ENCODE measurements at regions of chr1 and their contacts with region 1.

Region 1: DNA sequence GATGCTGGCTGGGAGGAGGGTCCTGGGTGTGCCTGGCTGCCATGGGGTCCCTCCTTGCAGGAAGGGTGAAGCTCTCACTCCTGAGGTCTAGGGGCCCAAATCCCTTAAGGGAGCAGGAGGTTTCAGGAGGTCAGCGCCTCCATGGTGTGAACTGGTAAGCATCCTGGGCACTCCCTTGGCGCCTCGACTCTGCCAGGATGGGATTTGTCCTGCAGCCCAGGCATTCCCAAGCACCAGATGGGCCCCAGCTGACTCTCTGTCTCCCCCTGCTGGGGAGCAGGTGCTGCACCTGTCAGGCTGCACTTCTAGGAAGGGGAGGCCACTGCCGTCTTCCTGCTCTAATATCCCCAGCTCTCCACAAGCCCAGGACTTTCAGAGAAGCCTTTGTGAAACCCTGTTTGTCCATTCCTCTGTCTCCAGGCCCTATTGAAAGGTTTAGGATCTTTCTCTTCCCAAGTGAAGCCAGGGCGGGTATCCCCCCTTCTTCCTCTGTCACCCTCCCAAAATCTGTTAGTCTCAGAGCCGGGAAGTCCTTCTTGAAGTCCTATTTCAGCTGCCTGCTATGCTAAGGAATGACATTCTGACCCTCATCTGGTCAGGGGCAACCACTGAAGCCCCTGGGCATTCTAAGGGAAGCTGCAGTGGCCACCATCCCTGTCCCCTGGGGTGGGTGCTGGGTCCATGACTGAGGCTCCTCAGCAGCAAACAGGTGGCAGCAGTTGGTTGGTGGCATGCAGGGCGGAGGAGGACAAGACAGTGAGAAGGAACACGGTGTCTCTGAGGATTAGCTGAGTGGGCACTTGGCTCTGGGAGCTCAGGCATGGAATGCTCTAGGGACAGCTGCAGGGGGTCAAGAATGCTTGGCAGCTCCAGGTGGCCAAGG is 3.3 kb downstream of the MYBPH start:
- H3K4me3 ChIP-seq: no peak overlapping the region
- H3K27ac ChIP-seq: no peak overlapping the region; the same call in 1 of the 2 replicates
- H3K4me1 ChIP-seq: no peaks in the 10 kb centered on the region; the same call in 1 of the 2 replicates
- CTCF ChIP-seq: peak; percentile 85

Region 2: GRCh38 chr1:203101915-203102634 is 70.3 kb before region 1 on chr1:
- CTCF ChIA-PET with region 1: interaction called, 10 read pairs
- POLR2A ChIA-PET with region 1: no interaction called
- H3K4me3 ChIP-seq: no peak overlapping the region
- H3K27ac ChIP-seq: no peak overlapping the region
- H3K4me1 ChIP-seq: no peaks in the 10 kb centered on the region
- CTCF ChIP-seq: no peak

Region 3: GRCh38 chr1:203127666-203128430 is 44.5 kb before region 1 on chr1 and contains the start of gene ADORA1:
- CTCF ChIA-PET with region 1: interaction called, 32 read pairs
- POLR2A ChIA-PET with region 1: interaction called, 5 read pairs
- H3K4me3 ChIP-seq: peak within 1 kb of the TSS; percentile 43
- H3K27ac ChIP-seq: peak within 1 kb of the TSS; percentile 42; the same call in 1 of the 2 replicates
- H3K4me1 ChIP-seq: no peaks in the 10 kb centered on the region
- CTCF ChIP-seq: no peak; the same call in none of the 2 replicates

Region 4: DNA sequence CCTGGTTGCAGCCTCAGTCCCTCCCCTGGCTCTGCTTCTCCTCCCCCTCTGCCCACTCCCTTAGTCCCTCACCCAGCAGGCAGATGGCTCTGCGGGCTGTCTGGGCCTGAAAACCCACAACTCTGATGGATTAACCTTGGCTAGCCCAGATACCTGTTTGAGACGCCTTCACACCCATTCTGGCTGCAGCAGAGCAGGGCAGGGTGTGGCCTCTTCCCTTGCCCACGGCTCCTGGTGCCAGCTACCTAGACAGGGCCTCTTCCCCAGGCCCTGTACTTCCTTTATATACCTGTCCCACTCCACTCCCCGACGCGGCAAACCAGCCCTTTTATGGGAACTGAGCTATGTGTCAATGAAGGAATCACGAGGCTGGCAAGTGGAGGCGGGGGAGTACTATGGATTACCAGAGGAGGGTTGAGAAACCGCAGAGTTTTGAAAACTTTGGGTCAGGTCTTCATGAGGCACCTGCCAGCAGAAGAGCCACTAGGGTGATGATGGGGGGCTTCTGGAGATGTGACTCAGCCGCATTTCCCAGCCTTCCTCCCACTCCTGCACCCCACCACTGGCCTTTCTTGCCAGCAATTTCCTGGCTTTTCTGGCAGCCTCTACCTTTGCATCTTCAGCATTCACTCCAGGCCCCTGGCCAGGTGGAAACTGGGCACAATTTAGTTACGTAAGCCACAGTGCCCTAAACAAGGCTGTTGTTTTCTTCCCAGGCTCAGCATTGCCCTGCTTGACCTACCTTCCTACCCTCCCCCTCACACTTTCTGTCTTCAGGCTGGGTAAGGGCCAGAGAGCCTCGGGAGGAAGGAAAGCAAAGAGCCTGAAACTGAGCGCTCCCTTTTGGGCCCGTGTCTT is 14.3 kb after region 1 on chr1 and contains the start of gene CHI3L1:
- CTCF ChIA-PET with region 1: interaction called, 20 read pairs
- POLR2A ChIA-PET with region 1: no interaction called
- H3K4me3 ChIP-seq: no peak within 1 kb of the TSS
- H3K27ac ChIP-seq: no peak within 1 kb of the TSS
- H3K4me1 ChIP-seq: no peaks in the 10 kb centered on the region
- CTCF ChIP-seq: no peak

Region 5: DNA sequence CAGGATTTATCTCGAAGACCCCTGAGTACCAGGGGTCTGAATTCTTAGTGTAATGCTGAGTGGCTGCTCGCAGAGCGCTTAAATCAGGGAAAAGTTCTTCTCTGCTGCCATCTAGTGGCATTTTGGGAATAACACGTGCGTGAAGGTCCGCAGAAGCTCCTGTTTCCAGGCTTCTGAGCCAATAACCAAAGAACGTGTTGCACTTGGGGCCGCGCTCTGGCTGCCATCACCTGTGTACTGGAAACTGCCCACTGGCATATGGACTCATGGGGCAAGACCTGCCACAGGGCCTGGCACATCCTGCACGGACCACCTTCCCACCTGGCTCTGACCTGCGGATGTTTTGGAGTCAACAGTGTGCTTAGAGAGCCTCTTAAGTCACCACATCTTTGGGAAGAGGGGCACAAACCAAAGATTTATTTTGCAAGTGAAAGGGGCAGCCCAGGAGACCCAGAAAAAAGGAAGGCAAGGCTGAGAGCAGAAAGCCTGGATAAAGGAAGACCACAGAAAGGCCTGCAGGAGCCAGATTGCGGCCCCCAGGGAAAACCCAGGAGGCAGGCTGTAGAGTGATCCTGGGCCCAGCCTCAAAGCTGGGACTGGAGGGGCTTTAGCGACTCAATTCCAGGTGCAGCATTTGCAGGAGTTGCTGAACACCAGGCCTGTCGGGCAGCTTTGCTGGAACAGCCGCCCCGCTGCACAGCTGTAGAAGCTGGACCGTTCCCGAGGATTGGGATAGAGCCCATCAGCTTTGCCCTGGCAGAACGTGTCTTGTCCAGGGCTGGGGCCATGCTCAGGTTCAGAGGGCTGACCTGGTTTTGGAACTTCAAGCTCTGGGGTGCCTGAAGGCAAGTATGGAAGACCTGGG is 44.1 kb after region 1 on chr1:
- CTCF ChIA-PET with region 1: interaction called, 22 read pairs
- POLR2A ChIA-PET with region 1: no interaction called
- H3K4me3 ChIP-seq: no peak overlapping the region
- H3K27ac ChIP-seq: no peak overlapping the region
- H3K4me1 ChIP-seq: no peaks in the 10 kb centered on the region
- CTCF ChIP-seq: peak; percentile 65

Region 6: DNA sequence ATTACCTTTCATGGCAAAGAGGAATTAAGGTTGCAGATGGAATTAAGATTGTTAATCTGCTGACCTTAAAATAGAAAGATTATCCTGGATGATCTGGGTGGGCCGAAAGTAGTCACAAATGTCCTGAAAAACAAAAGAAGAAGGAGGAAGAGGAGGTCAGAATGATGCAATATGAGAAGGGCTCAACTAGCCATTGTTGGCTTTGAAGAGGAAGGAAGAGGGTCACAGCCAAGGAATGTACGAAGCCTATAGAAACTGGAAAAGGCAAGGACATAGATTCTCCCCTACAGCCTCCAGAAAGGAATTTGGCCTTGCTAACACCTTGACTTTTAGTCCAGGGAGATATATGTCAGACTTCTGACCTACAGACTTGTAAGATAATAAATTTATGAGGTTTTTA is 217.9 kb after region 1 on chr1:
- CTCF ChIA-PET with region 1: no interaction called
- POLR2A ChIA-PET with region 1: no interaction called
- H3K4me3 ChIP-seq: no peak overlapping the region
- H3K27ac ChIP-seq: no peak overlapping the region
- H3K4me1 ChIP-seq: no peaks in the 10 kb centered on the region
- CTCF ChIP-seq: no peak

Region 7: GRCh38 chr1:203428981-203429599 is 256.7 kb after region 1 on chr1:
- CTCF ChIA-PET with region 1: no interaction called
- POLR2A ChIA-PET with region 1: no interaction called
- H3K4me3 ChIP-seq: no peak overlapping the region
- H3K27ac ChIP-seq: no peak overlapping the region
- H3K4me1 ChIP-seq: no peaks in the 10 kb centered on the region
- CTCF ChIP-seq: no peak